A673 (cell line): ENCODE measurements at regions of chr11 and their contacts with region 1.

Region 1: DNA sequence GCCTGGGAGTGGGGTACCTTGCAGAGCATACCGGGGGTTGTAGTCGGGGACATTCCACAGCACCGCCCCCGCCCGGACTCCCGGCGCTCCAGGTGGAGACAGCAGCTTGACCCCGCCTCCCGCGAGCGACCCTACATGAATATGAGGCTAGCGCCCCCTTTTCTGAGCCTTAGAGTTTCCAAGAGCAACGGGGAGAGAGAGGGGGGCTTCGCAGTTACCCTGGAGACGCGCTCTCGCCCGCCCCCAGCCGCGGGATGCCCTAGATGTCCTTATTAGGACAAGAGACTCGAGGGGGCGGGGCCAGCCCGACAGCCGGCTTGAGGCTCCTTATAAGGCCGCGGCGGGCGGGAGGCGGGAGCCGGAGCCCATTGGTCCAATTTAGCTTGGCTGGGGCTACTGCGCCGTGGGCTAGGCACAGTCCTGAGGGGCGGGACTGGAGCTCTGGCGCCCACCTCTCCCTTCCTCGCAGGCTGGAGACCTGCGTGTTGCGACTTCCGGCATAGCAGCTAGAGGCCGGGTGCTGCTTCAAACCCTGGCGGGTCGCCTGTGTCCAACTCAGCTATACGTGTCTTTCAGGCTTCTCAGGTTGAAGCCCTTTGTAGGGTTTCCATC is 927 bp upstream of the MUS81 start:
- DNase-seq: peak; percentile 100
- H3K4me3 ChIP-seq: peak overlapping the region; percentile 95
- H3K27ac ChIP-seq: peak overlapping the region; percentile 99
- H3K4me1 ChIP-seq: peaks cover 25% of the 10 kb centered on the region
- H3K27me3 ChIP-seq: no peaks in the 10 kb centered on the region
- CTCF ChIP-seq: peak; percentile 44; the same call in 1 of the 2 replicates

Region 2: GRCh38 chr11:64778508-64779346 is 1080.6 kb before region 1 on chr11 and contains the start of gene SF1:
- CTCF ChIA-PET with region 1: no interaction called
- POLR2A ChIA-PET with region 1: no interaction called
- intact Hi-C with region 1: loop called (anchors 5 kb)
- DNase-seq: peak; percentile 100
- H3K4me3 ChIP-seq: peak within 1 kb of the TSS; percentile 80
- H3K27ac ChIP-seq: peak within 1 kb of the TSS; percentile 99
- H3K4me1 ChIP-seq: peaks cover 21% of the 10 kb centered on the region
- H3K27me3 ChIP-seq: no peaks in the 10 kb centered on the region
- CTCF ChIP-seq: 0 out of 2 replicates have a peak, but pooled peaks have one; percentile 10
- total RNA-seq, gene SF1: 467 and 472 TPM in 2 replicates

Region 3: GRCh38 chr11:65662799-65663638 is 196.3 kb before region 1 on chr11 and contains the start of gene RELA:
- CTCF ChIA-PET with region 1: no interaction called
- POLR2A ChIA-PET with region 1: interaction called, 11 read pairs
- intact Hi-C with region 1: no loop called
- DNase-seq: peak; percentile 96
- H3K4me3 ChIP-seq: peak within 1 kb of the TSS; percentile 79
- H3K27ac ChIP-seq: peak within 1 kb of the TSS; percentile 85
- H3K4me1 ChIP-seq: peaks cover 7% of the 10 kb centered on the region
- H3K27me3 ChIP-seq: no peaks in the 10 kb centered on the region
- CTCF ChIP-seq: no peak
- total RNA-seq, gene RELA: 92.0 and 99.3 TPM in 2 replicates

Region 4: DNA sequence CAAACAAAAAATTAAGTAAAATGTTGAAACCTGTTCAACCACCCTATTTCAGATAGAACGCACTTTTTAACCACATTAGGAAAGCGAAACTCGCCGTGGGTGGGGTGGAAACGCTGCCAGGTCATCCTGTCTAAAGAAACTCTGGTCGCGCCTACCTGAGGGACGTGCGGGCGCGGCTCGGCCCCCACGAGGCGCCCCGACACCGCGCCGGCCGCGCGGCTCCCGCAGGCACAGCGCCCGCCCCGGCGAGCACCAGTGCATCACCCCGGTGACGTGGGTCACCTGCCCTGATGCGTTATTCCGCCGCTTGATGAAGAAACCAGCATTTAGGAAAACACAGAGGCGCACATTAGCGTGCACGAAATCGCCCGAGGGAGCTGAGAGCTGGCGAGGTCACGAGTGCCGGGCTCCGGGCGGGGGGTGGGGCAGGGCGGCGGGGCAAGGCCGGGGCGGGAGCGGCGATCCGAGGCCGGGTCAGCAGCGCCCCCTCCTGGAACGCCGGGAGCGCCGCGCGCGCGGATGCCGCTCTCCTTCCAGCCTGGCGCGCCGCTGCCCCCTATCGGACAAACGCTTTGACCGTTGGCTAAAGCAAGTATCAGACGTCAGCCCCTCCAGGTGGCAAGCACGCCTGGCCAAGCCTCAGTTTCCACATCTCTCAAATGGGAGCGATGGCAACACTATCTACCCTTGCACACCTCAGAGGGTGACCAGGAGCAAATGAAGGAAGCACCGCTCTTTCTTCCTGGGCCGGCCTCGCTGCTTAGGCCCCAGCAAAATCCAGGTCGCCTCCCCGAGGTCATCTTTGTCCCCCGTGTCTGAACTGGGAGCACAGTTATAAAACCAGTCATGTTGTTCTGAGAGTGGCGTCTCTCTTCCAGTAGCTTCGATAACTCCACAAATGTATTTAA is 41.2 kb before region 1 on chr11:
- CTCF ChIA-PET with region 1: interaction called, 12 read pairs
- POLR2A ChIA-PET with region 1: no interaction called
- intact Hi-C with region 1: no loop called
- DNase-seq: peak; percentile 91
- H3K4me3 ChIP-seq: peak overlapping the region; percentile 59
- H3K27ac ChIP-seq: no peak overlapping the region
- H3K4me1 ChIP-seq: no peaks in the 10 kb centered on the region
- H3K27me3 ChIP-seq: no peaks in the 10 kb centered on the region
- CTCF ChIP-seq: peak; percentile 97

Region 5: DNA sequence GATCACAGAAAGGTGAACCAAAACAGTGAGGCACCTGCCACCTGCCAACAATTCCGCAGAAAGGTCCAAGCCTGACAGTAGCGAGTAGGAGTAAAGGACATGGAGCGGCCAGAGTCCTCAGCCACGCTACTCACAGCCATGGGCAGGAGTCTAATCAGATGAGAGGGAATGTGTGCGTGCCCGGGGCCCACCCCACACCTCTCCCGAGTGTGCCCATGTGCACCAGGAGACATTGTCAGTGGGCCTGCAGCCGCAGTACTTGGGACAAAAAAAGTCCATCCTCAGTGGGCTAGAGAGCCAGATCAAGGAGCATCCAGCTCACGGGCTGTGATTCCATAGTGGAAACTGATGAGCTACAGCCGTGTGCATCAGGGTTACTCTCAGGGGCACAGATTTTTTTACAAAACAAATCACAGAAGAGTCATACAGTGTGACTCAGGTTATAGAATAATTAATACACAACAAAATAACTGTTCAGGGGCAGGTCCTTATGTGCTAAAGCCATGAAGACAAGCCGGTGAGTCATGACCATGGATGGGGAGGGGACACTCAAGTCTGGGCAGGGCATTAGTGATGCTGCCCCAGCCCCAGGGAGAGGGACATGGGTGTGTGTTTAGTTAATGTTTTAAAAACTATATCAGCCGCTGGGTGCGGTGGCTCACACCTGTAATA is 114.3 kb after region 1 on chr11:
- CTCF ChIA-PET with region 1: no interaction called
- POLR2A ChIA-PET with region 1: interaction called, 11 read pairs
- intact Hi-C with region 1: no loop called
- DNase-seq: no peak
- H3K4me3 ChIP-seq: no peak overlapping the region
- H3K27ac ChIP-seq: no peak overlapping the region
- H3K4me1 ChIP-seq: no peaks in the 10 kb centered on the region
- H3K27me3 ChIP-seq: no peaks in the 10 kb centered on the region
- CTCF ChIP-seq: no peak

Region 6: GRCh38 chr11:66317723-66318599 is 458.7 kb after region 1 on chr11:
- CTCF ChIA-PET with region 1: no interaction called
- POLR2A ChIA-PET with region 1: no interaction called
- intact Hi-C with region 1: no loop called
- DNase-seq: peak; percentile 96
- H3K4me3 ChIP-seq: peak overlapping the region; percentile 57
- H3K27ac ChIP-seq: peak overlapping the region; percentile 100
- H3K4me1 ChIP-seq: peaks cover 61% of the 10 kb centered on the region
- H3K27me3 ChIP-seq: no peaks in the 10 kb centered on the region
- CTCF ChIP-seq: no peak